K562 (cell line): ENCODE measurements at regions of chr11 and their contacts with region 1.

Region 1: DNA sequence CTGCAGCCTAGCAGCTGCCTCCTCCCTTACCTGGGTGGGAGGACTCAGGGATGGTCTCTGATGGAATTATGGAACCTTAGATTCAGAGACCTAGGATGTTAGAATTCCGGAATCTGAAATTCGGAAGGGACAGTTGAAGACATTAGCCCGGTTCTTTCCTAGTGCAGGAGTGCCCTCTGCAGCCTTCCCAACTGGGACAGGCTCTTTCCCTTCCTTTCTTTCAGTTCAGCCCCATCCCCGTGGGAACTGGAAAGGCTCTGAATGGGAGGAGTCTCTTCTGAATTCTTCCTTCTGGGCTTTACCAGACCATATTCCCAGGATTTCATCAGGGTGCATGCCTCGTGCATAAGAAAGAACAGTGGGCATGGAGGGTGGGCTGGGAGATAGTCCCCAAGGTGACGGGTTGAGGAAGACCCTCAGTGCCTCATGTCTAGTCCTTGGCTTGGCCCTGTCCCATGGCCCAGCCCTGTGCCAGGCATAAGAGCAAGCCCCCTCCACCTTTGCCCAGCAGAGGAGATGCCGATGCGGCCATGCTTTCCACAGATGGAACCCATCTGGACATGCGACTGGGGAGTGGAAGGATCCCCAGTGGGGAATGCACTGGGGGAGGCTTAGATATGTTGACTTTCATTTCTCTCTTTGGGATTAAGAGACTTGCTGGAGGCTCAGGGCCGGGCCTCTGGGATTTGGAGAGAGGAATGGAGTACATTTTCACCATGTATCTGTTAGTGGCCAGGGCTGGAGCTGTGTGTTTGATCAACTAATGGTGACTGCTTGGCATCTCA is 14.4 kb downstream of the DNAJB13 start:
- DNase-seq: no peak
- ATAC-seq: no peak
- H3K4me3 ChIP-seq: no peak overlapping the region
- H3K27ac ChIP-seq: no peak overlapping the region
- H3K4me1 ChIP-seq: peaks cover 7 to 13% of the 10 kb centered on the region in 2 experiments; a peak in 3 of 5 replicates
- H3K27me3 ChIP-seq: no peaks in the 10 kb centered on the region; a peak in 1 of 5 replicates
- CTCF ChIP-seq: no peak
- EP300 ChIP-seq: no peak
- POLR2A ChIP-seq: no peak
- RAD21 ChIP-seq: no peak

Region 2: DNA sequence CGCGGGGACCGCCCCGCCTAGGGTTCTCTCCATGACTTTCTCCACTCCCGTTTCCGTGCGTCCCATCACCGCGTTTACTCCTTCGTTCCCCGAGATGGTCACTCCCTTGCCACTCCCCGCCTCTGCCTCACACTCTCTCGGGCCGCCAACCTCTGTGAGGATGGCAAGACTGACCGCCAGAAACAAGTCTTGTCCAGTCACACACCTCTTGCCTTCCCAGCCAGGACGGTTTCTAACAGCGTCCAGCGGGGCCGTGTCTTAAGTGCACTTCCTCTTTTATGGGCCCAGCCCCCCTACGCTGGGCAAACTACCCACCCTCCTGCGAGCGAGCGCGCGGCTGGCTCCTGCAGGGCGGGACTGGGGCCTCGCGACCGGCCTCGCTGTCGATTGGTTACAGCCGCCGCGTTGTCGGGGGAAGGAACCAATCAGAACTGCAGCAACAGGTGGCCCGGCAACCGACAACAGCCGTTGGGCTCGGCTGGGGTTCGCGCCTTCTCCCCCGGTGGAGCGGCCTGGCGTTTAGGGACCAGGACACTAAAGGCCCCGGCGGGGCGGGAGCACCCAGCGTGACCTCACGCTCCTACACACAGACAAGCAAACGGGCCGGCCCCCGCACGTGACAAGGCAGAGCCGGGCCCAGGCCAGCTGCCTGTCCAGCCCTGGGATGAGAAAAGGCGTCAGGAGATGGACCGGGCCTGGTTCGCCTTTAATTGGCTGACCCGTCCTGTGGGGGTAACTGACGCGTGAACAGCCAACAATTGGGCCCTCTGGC is 17.9 kb after region 1 on chr11:
- CTCF ChIA-PET with region 1: no interaction called
- POLR2A ChIA-PET with region 1: interaction called, 54 read pairs
- in situ Hi-C with region 1: no loop called
- intact Hi-C with region 1: no loop called
- DNase-seq: peak; percentile 96 to 99 (median 98)
- ATAC-seq: peak; percentile 87
- H3K4me3 ChIP-seq: peak overlapping the region; percentile 67
- H3K27ac ChIP-seq: peak overlapping the region; percentile 99
- H3K4me1 ChIP-seq: peaks cover 41 to 53% of the 10 kb centered on the region in 2 experiments
- H3K27me3 ChIP-seq: no peaks in the 10 kb centered on the region
- CTCF ChIP-seq: peak in 1 of 3 experiments; percentile 1; a peak in 1 of 6 replicates
- EP300 ChIP-seq: peak; percentile 62
- POLR2A ChIP-seq: peak; percentile 95
- RAD21 ChIP-seq: no peak

Region 3: GRCh38 chr11:74033046-74033445 is 67.8 kb after region 1 on chr11:
- CTCF ChIA-PET with region 1: no interaction called
- POLR2A ChIA-PET with region 1: no interaction called
- in situ Hi-C with region 1: no loop called
- intact Hi-C with region 1: loop called (anchors 1 kb)
- DNase-seq: no peak
- ATAC-seq: peak; percentile 47; the same call in 1 of the 3 replicates
- H3K4me3 ChIP-seq: no peak overlapping the region
- H3K27ac ChIP-seq: no peak overlapping the region
- H3K4me1 ChIP-seq: no peaks in the 10 kb centered on the region
- H3K27me3 ChIP-seq: no peaks in the 10 kb centered on the region
- CTCF ChIP-seq: peak in 1 of 3 experiments; percentile 34; a peak in 2 of 6 replicates
- EP300 ChIP-seq: no peak
- POLR2A ChIP-seq: no peak
- RAD21 ChIP-seq: peak in 1 of 2 experiments; percentile 40; a peak in 2 of 4 replicates

Region 4: DNA sequence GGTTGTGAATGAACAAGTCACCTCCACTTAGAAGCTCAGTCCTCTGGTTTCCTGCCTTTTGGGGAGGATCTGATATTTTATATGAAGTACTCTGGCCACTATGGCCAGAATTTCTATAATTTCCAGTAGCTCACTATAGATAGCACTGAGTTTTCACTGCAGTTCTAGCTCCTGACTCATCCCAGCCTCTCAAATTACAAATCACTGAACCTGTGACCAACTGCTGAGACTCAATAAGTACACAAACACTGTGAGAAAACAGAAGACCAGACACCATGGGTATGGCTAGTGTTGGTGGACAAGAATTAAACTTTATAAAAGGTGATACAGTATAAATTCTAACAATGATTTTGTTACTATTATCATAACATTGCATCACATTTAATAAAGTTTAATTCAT is 90.7 kb after region 1 on chr11:
- CTCF ChIA-PET with region 1: no interaction called
- POLR2A ChIA-PET with region 1: no interaction called
- in situ Hi-C with region 1: no loop called
- intact Hi-C with region 1: no loop called
- DNase-seq: no peak
- ATAC-seq: peak; percentile 57; the same call in 2 of the 3 replicates
- H3K4me3 ChIP-seq: no peak overlapping the region
- H3K27ac ChIP-seq: 0 out of 3 replicates have a peak overlapping the region, but pooled peaks have one; percentile 9
- H3K4me1 ChIP-seq: peaks cover 0 to 10% of the 10 kb centered on the region in 2 experiments; a peak in 4 of 5 replicates
- H3K27me3 ChIP-seq: no peaks in the 10 kb centered on the region
- CTCF ChIP-seq: no peak
- EP300 ChIP-seq: no peak
- POLR2A ChIP-seq: no peak
- RAD21 ChIP-seq: no peak

Region 5: DNA sequence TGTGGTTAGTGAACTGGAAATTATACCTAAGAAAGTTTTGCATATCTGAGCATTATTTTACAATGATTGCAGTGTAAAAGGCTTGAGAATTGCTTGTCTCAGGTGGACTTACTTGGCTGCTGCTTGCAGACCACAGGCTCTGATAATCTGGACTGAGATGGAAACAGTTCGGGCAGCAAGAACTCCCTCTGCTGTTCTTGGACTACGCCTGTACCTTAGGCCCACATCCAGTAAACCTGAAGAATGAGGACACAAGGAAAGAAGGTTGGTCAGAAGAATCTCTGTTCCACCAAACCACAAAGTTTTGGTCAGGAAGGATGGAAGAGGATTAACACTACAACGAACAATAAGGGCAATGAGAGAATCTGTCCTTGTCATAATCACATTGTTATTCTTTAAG is 125.4 kb after region 1 on chr11:
- CTCF ChIA-PET with region 1: interaction called, 14 read pairs
- POLR2A ChIA-PET with region 1: no interaction called
- in situ Hi-C with region 1: no loop called
- intact Hi-C with region 1: loop called (anchors 1 kb)
- DNase-seq: peak in 2 of 4 experiments; percentile 25 to 70
- ATAC-seq: peak; percentile 66
- H3K4me3 ChIP-seq: no peak overlapping the region
- H3K27ac ChIP-seq: no peak overlapping the region
- H3K4me1 ChIP-seq: peaks cover 6 to 22% of the 10 kb centered on the region in 2 experiments
- H3K27me3 ChIP-seq: no peaks in the 10 kb centered on the region
- CTCF ChIP-seq: peak; percentile 43 to 67 (median 49); a peak in 5 of 6 replicates
- EP300 ChIP-seq: no peak
- POLR2A ChIP-seq: no peak
- RAD21 ChIP-seq: peak; percentile 74 to 88

Region 6: GRCh38 chr11:74255741-74256369 is 290.6 kb after region 1 on chr11:
- CTCF ChIA-PET with region 1: no interaction called
- POLR2A ChIA-PET with region 1: no interaction called
- in situ Hi-C with region 1: no loop called
- intact Hi-C with region 1: loop called (anchors 2 kb)
- DNase-seq: peak; percentile 72 to 77 (median 76)
- ATAC-seq: peak; percentile 89
- H3K4me3 ChIP-seq: no peak overlapping the region
- H3K27ac ChIP-seq: no peak overlapping the region
- H3K4me1 ChIP-seq: no peaks in the 10 kb centered on the region
- H3K27me3 ChIP-seq: peaks cover 2 to 3% of the 10 kb centered on the region in 2 experiments; a peak in 2 of 5 replicates
- CTCF ChIP-seq: peak; percentile 84 to 91 (median 85)
- EP300 ChIP-seq: no peak
- POLR2A ChIP-seq: no peak
- RAD21 ChIP-seq: peak; percentile 79 to 86

Region 7: GRCh38 chr11:74321487-74322188 is 356.4 kb after region 1 on chr11:
- CTCF ChIA-PET with region 1: interaction called, 8 read pairs
- POLR2A ChIA-PET with region 1: no interaction called
- in situ Hi-C with region 1: no loop called
- intact Hi-C with region 1: loop called (anchors 1 kb)
- DNase-seq: peak; percentile 30 to 59 (median 39)
- ATAC-seq: peak; percentile 74
- H3K4me3 ChIP-seq: no peak overlapping the region
- H3K27ac ChIP-seq: no peak overlapping the region
- H3K4me1 ChIP-seq: no peaks in the 10 kb centered on the region; a peak in 1 of 5 replicates
- H3K27me3 ChIP-seq: peaks cover 0 to 10% of the 10 kb centered on the region in 2 experiments; a peak in 1 of 5 replicates
- CTCF ChIP-seq: peak; percentile 61 to 75 (median 71); a peak in 5 of 6 replicates
- EP300 ChIP-seq: no peak
- POLR2A ChIP-seq: no peak
- RAD21 ChIP-seq: peak in 1 of 2 experiments; percentile 69; a peak in 3 of 4 replicates

Region 8: GRCh38 chr11:74671520-74672196 is 706.4 kb after region 1 on chr11:
- CTCF ChIA-PET with region 1: no interaction called
- POLR2A ChIA-PET with region 1: no interaction called
- in situ Hi-C with region 1: no loop called
- intact Hi-C with region 1: no loop called
- DNase-seq: no peak
- ATAC-seq: no peak
- H3K4me3 ChIP-seq: no peak overlapping the region
- H3K27ac ChIP-seq: no peak overlapping the region
- H3K4me1 ChIP-seq: peaks cover 13 to 16% of the 10 kb centered on the region in 2 experiments
- H3K27me3 ChIP-seq: no peaks in the 10 kb centered on the region
- CTCF ChIP-seq: no peak
- EP300 ChIP-seq: no peak
- POLR2A ChIP-seq: no peak
- RAD21 ChIP-seq: no peak